ENCODE measurements at regions of chr1 and their contacts with region 1.

Region 1: DNA sequence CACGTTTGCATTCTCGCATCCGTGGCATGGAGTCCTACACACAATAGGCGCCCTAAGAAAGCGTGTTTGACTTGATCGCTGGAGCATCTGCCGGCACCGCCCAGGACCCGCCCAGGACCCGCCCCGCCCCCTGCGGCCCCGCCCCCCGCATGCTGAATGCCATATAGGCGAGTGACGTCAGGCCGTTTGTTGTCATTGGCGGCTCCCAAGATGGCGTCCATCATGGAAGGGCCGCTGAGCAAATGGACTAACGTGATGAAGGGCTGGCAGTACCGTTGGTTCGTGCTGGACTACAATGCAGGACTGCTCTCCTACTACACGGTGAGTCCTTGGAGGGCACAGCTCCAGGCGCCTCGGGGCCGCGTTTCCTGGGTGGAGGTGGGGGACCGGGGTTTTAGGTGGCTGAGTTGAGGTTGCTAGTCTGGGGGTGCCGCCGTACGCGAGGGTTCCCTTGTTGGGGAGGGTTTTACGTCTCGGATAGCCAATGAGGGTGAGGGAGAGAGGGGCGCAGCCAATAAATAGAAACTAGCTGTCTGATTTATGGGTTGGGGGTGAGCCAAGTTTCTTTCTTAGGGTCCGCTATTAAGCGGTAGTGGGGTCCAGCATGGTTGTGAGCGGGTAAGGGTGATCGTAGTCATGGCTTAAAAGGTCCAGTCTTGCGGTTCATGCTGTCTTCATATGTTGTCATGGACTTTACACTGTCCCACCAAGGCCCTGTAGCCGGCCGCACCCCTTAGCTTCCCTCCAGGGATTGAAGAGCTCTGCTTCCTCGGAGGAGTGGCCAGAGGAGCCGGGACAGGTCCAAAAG is at the start of gene OSBPL9:
- DNase-seq: peak; percentile 94
- H3K4me3 Mint-ChIP-seq: peak within 1 kb of the TSS; percentile 98
- H3K27ac Mint-ChIP-seq: peak within 1 kb of the TSS; percentile 89
- H3K4me1 Mint-ChIP-seq: peaks cover 25% of the 10 kb centered on the region
- H3K27me3 Mint-ChIP-seq: no peaks in the 10 kb centered on the region
- total RNA-seq, gene OSBPL9: 38.2 to 40.7 TPM

Region 2: GRCh38 chr1:51627678-51628077 is 10.6 kb after region 1 on chr1:
- CTCF ChIA-PET with region 1: interaction called, 6 read pairs
- intact Hi-C with region 1: loop called (anchors 1 kb)
- DNase-seq: peak; percentile 14
- H3K4me3 Mint-ChIP-seq: no peak overlapping the region
- H3K27ac Mint-ChIP-seq: no peak overlapping the region
- H3K4me1 Mint-ChIP-seq: peaks cover 27% of the 10 kb centered on the region
- H3K27me3 Mint-ChIP-seq: no peaks in the 10 kb centered on the region

Region 3: DNA sequence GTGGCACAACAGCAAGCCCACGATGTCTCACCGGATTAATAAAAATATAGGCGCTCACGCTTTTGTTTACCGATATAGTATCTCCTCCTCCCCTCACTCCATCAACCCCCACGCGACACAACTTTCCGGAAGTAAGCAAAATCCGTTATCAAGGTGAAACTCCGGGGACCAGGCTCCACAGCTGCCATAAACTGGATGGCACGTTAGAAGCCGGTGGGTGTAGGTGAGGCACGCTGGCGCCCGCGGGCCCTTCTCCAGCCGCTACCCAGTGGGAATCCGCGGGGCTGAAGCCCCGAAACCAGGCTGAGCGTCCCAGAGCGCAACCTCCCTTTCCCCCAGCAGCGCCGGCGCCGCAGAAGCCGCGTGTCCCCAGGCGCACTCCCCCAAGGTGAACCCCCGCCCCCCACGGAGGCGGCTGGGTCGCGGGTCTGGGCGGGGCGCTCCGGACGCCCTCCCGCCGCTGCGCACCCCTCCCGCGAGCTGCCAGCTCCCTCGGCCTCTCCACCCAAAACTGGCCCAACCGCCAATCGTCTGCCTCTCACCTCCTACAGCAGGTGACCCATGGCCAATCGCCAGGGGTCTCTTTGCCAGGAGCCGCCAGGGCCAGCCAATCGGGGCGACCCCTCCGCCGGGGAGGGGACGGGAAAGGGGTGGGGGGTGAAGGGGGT is 112.2 kb after region 1 on chr1:
- CTCF ChIA-PET with region 1: no interaction called
- intact Hi-C with region 1: loop called (anchors 1 kb)
- DNase-seq: peak; percentile 97
- H3K4me3 Mint-ChIP-seq: peak overlapping the region; percentile 87
- H3K27ac Mint-ChIP-seq: peak overlapping the region; percentile 87
- H3K4me1 Mint-ChIP-seq: peaks cover 33% of the 10 kb centered on the region
- H3K27me3 Mint-ChIP-seq: no peaks in the 10 kb centered on the region